ENCODE measurements at regions of chr2 and their contacts with region 1.

Region 1: DNA sequence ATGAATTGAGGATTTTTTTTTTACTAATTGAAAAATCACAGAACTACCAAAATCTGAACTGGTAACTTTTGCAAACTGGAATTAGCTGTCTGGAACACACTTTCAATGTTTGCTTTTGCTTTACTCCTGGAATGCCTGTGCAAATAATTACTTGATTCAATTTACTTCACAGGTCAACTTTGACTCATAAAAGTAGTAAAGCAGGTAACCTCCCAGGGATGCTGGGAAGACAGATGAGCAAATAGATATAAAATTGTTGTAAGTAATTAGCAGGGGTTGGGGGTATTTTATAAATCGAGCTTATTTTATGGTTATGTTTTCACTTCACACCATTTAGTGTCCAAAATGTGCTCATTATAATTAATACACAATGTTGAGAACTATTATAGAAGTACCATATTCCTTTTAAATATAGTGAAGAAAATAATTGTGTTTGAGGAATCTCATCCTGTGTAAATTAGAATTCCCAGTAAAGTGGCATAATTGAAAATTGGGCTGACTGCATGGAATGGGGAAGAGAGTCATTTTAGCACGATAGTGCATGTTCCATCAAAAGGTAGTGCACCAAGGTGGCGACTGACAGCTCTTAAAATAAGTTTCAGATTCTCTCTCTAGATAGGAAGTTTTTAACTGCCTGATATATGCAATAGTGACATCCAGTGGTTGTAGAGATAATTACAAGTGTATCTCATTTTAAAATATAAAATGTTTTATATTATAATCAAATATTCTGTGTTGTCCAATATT is 398.1 kb upstream of the HNRNPA3 start:
- DNase-seq: no peak
- H3K4me3 ChIP-seq: no peak overlapping the region
- H3K27ac ChIP-seq: no peak overlapping the region
- H3K4me1 ChIP-seq: no peaks in the 10 kb centered on the region
- H3K27me3 ChIP-seq: no peaks in the 10 kb centered on the region
- CTCF ChIP-seq: peak; percentile 58 to 71 (median 60)
- EP300 ChIP-seq: no peak
- POLR2A ChIP-seq: no peak

Region 2: GRCh38 chr2:176110975-176111663 is 703.4 kb before region 1 on chr2:
- in situ Hi-C with region 1: loop called in 2 of 4 experiments (anchors 25 kb)
- intact Hi-C with region 1: no loop called
- DNase-seq: peak; percentile 69
- H3K4me3 ChIP-seq: no peak overlapping the region
- H3K27ac ChIP-seq: peak overlapping the region in 2 of 4 donors; percentile 37 to 69
- H3K4me1 ChIP-seq: peaks cover 8 to 43% (median 16%) of the 10 kb centered on the region in 4 donors
- H3K27me3 ChIP-seq: peaks cover 98% of the 10 kb centered on the region
- CTCF ChIP-seq: peak; percentile 56 to 68 (median 58)
- EP300 ChIP-seq: no peak
- POLR2A ChIP-seq: no peak

Measured in transverse colon (tissue), 4 donors.